Colonic mucosa (tissue), 4 donors: ENCODE measurements at regions of chr13 and their contacts with region 1.

Region 1: GRCh38 chr13:113816946-113817859 is 46.7 kb downstream of the GAS6 start:
- DNase-seq: peak; percentile 90
- H3K4me3 ChIP-seq: no peak overlapping the region
- H3K27ac ChIP-seq: no peak overlapping the region
- H3K4me1 ChIP-seq: no peaks in the 10 kb centered on the region
- H3K27me3 ChIP-seq: no peaks in the 10 kb centered on the region
- CTCF ChIP-seq: peak; percentile 75

Region 2: DNA sequence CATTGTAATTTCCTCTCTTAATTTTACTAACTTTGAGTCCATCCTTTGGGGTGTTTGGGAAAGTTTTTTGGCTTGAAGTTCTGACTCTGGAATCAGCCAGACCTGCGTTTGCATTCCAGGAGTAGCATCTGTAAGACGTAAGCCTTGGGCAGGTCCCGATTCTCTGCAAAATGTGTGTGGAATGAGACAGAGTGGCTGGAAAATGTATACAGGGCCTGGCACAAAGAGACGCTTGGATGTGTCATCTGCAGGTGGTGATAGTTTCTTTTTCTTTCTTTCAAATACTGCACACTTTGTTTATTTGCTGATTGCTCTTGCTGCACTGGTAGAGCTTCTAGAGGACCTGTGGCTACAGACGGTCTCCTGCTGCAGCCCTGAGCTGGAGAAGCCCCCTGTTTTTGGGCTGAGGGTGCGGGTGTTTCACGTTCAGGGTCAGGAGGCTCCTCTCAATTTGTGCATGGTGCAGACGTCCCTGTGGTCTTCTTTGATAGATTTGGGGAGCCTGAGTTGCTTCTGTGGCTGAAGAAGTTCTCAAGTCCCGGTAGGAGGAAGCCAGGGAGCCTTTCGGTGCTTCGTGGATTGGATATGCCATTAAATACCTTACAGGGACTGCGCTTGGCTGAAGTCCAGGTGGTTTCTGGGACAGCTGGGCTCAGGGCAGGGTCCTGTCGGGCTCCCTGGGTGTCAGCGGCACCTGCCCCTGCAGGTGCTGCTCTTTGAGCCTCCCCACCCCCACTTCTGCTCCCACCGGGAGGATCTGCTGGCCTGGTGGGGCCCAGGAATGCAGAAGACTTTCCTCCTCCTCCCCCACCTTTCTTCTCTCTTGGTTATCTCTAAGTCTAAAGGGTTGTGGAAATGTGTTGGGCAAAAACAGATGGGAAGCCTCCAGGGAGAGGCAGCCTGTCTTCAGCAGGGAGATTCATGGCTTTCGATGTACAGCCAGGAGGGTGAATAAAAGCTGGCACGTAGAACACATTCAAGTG is 90.7 kb after region 1 on chr13:
- intact Hi-C with region 1: loop called (anchors 5 kb)
- DNase-seq: peak; percentile 34
- H3K4me3 ChIP-seq: no peak overlapping the region
- H3K27ac ChIP-seq: no peak overlapping the region
- H3K4me1 ChIP-seq: no peaks in the 10 kb centered on the region
- H3K27me3 ChIP-seq: no peaks in the 10 kb centered on the region
- CTCF ChIP-seq: no peak

Region 3: GRCh38 chr13:113951246-113951999 is 134.2 kb after region 1 on chr13:
- intact Hi-C with region 1: loop called (anchors 1 kb)
- DNase-seq: peak; percentile 85
- H3K4me3 ChIP-seq: no peak overlapping the region
- H3K27ac ChIP-seq: no peak overlapping the region
- H3K4me1 ChIP-seq: peaks cover 3% of the 10 kb centered on the region
- H3K27me3 ChIP-seq: no peaks in the 10 kb centered on the region
- CTCF ChIP-seq: peak; percentile 63

Region 4: GRCh38 chr13:114234645-114235421 is 417.6 kb after region 1 on chr13 and contains the start of gene CDC16:
- intact Hi-C with region 1: loop called (anchors 5 kb)
- DNase-seq: peak; percentile 96
- H3K4me3 ChIP-seq: peak within 1 kb of the TSS; percentile 92
- H3K27ac ChIP-seq: peak within 1 kb of the TSS; percentile 93
- H3K4me1 ChIP-seq: no peaks in the 10 kb centered on the region
- H3K27me3 ChIP-seq: no peaks in the 10 kb centered on the region
- CTCF ChIP-seq: peak; percentile 26
- total RNA-seq, gene CDC16: 35.7 to 47.9 TPM

Region 5: GRCh38 chr13:114303700-114304327 is 486.6 kb after region 1 on chr13:
- intact Hi-C with region 1: no loop called
- DNase-seq: no peak
- H3K4me3 ChIP-seq: no peak overlapping the region
- H3K27ac ChIP-seq: no peak overlapping the region
- H3K4me1 ChIP-seq: no peaks in the 10 kb centered on the region
- H3K27me3 ChIP-seq: no peaks in the 10 kb centered on the region
- CTCF ChIP-seq: no peak